Natural killer cell (primary cell): ENCODE measurements at regions of chr7 and their contacts with region 1.

Region 1: GRCh38 chr7:23273141-23273599 is 26.0 kb upstream of the MALSU1 start:
- DNase-seq: peak; percentile 77 to 93
- ATAC-seq: peak; percentile 95 to 98 (median 97)
- H3K4me3 ChIP-seq: no peak overlapping the region
- H3K4me3 Mint-ChIP-seq: peak overlapping the region; percentile 55
- H3K27ac ChIP-seq: no peak overlapping the region
- H3K27ac Mint-ChIP-seq: peak overlapping the region in 1 of 2 donors; percentile 7
- H3K4me1 ChIP-seq: peaks cover 7% of the 10 kb centered on the region
- H3K4me1 Mint-ChIP-seq: peaks cover 9 to 10% of the 10 kb centered on the region in 2 donors
- H3K27me3 ChIP-seq: no peaks in the 10 kb centered on the region
- H3K27me3 Mint-ChIP-seq: peaks cover 7 to 17% of the 10 kb centered on the region in 2 donors
- CTCF ChIP-seq: peak; percentile 87

Region 2: GRCh38 chr7:23462846-23463245 is 189.7 kb after region 1 on chr7:
- intact Hi-C with region 1: loop called (anchors 5 kb)
- DNase-seq: peak in 1 of 2 donors; percentile 44
- ATAC-seq: peak in 1 of 3 donors; percentile 34
- H3K4me3 ChIP-seq: no peak overlapping the region
- H3K4me3 Mint-ChIP-seq: no peak overlapping the region
- H3K27ac ChIP-seq: no peak overlapping the region
- H3K27ac Mint-ChIP-seq: no peak overlapping the region
- H3K4me1 ChIP-seq: peaks cover 6% of the 10 kb centered on the region
- H3K4me1 Mint-ChIP-seq: peaks cover 6 to 7% of the 10 kb centered on the region in 2 donors
- H3K27me3 ChIP-seq: peaks cover 25% of the 10 kb centered on the region
- H3K27me3 Mint-ChIP-seq: peaks cover 60 to 64% of the 10 kb centered on the region in 2 donors
- CTCF ChIP-seq: no peak

Region 3: GRCh38 chr7:23520582-23520981 is 247.4 kb after region 1 on chr7:
- intact Hi-C with region 1: loop called (anchors 10 kb)
- DNase-seq: no peak
- ATAC-seq: no peak
- H3K4me3 ChIP-seq: no peak overlapping the region
- H3K4me3 Mint-ChIP-seq: no peak overlapping the region
- H3K27ac ChIP-seq: no peak overlapping the region
- H3K27ac Mint-ChIP-seq: peak overlapping the region in 1 of 2 donors; percentile 26
- H3K4me1 ChIP-seq: peaks cover 11% of the 10 kb centered on the region
- H3K4me1 Mint-ChIP-seq: peaks cover 42 to 58% of the 10 kb centered on the region in 2 donors
- H3K27me3 ChIP-seq: no peaks in the 10 kb centered on the region
- H3K27me3 Mint-ChIP-seq: no peaks in the 10 kb centered on the region
- CTCF ChIP-seq: no peak

Region 4: GRCh38 chr7:23712368-23713284 is 439.5 kb after region 1 on chr7:
- intact Hi-C with region 1: loop called (anchors 1 kb)
- DNase-seq: peak in 1 of 2 donors; percentile 72
- ATAC-seq: no peak
- H3K4me3 ChIP-seq: no peak overlapping the region
- H3K4me3 Mint-ChIP-seq: no peak overlapping the region
- H3K27ac ChIP-seq: no peak overlapping the region
- H3K27ac Mint-ChIP-seq: no peak overlapping the region
- H3K4me1 ChIP-seq: no peaks in the 10 kb centered on the region
- H3K4me1 Mint-ChIP-seq: peaks cover 0 to 5% of the 10 kb centered on the region in 2 donors
- H3K27me3 ChIP-seq: peaks cover 2% of the 10 kb centered on the region
- H3K27me3 Mint-ChIP-seq: peaks cover 0 to 5% of the 10 kb centered on the region in 2 donors
- CTCF ChIP-seq: peak; percentile 71